KBM-7 (cell line): ENCODE measurements at regions of chrX and their contacts with region 1.

Region 1: GRCh38 chrX:69222103-69223090 is 57.1 kb upstream of the PJA1 start:
- DNase-seq: peak; percentile 74

Region 2: GRCh38 chrX:68828740-68829552 is 393.5 kb before region 1 on chrX and contains the start of gene EFNB1:
- in situ Hi-C with region 1: loop called (anchors 10 kb)
- DNase-seq: peak; percentile 98